GM23248 (cell line): ENCODE measurements at regions of chr13 and their contacts with region 1.

Region 1: DNA sequence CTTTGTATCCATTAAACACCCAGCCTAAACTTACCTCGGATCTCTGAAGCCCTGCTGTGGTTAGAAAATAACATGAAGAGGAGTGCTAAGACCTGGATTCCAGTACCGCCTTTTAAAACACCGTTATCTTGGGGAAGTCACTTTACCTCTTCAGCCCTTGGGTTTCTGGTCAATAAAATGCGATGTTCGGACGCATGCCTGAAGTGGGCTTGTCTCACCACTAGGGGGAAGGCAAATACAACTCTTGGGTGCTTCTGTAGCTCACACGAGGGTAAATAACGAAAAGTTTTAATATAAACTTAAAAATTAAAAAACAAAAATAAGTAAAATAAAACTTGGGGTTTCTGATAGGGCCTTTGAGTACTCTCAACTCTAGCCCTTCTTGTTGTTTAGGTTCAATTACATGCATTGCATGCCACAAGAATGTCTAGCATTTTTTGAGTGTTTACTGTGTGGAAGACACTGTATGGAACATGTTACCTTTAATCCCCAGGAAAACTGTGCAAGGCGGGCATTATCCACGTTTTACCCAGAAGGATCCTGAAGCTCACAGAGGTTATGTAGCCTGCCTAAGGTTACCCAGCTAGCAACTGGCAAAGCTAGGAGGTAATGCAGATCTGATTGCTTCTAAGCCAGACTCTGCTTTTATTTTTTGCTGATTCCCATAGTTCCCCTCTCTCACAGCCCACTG is 240.4 kb downstream of the LMO7 start:
- DNase-seq: peak; percentile 77
- H3K4me3 ChIP-seq: no peak overlapping the region
- H3K27ac ChIP-seq: no peak overlapping the region
- H3K4me1 ChIP-seq: no peaks in the 10 kb centered on the region
- H3K27me3 ChIP-seq: no peaks in the 10 kb centered on the region

Region 2: DNA sequence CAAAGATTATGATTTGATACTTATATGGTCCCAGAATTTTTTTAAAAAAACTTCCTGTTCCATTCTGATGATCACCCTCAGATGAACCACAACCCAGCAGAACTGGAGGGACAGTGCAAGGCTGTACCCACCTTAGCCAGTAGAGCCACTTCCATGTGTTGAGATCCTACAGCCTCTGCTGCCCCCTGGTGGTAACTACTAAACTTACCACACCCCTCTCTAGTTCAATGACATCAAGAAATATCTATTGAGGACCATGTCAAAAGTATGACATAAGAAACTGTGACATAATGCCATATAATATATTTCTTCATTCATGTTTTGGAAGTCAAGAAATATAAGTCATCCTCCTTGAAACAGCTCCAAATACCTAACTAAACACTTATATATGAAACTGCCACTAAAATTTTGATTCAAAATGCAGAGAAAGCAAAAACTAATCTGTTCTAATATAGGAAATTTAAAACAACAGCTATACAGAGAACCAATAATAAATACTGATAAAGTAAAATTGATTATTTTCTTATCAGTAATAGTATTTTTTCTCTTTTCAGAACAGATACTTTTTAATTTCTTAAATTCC is 597.1 kb after region 1 on chr13:
- in situ Hi-C with region 1: loop called (anchors 5 kb)
- DNase-seq: peak; percentile 79
- H3K4me3 ChIP-seq: no peak overlapping the region
- H3K27ac ChIP-seq: no peak overlapping the region
- H3K4me1 ChIP-seq: no peaks in the 10 kb centered on the region
- H3K27me3 ChIP-seq: peaks cover 18% of the 10 kb centered on the region

Region 3: DNA sequence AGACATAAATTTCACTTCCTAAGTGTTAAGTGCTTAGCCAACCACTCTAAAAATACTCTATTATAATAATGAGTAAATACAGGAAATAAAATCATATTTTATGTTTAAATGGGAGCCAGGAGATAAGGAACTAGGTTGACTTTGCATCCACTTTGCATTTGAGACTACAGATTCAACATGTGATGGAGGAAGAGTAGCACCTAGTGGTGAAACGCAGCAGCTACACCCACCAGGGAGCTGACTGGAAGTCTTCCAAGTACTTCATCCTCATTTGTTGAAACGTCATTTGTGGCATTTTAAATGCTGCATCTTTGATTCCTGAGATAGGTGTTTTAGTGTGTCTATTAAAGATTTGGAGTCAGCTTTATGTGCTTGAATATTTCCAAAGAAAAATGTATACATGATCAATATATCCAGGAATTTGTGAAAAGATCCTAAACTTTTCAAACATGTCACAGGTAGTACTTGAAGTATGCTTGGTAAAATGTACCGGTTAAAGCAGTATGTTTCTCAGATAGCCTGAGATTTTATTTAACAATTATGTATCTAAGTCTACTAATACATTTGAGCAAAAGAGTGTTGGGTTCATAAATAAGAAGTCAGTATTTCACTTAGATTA is 1027.1 kb after region 1 on chr13:
- in situ Hi-C with region 1: loop called (anchors 10 kb)
- DNase-seq: peak; percentile 83
- H3K4me3 ChIP-seq: no peak overlapping the region
- H3K27ac ChIP-seq: no peak overlapping the region
- H3K4me1 ChIP-seq: no peaks in the 10 kb centered on the region
- H3K27me3 ChIP-seq: peaks cover 7% of the 10 kb centered on the region; the same call in 1 of the 2 replicates